ENCODE measurements at regions of chr12 and their contacts with region 1.

Region 1: DNA sequence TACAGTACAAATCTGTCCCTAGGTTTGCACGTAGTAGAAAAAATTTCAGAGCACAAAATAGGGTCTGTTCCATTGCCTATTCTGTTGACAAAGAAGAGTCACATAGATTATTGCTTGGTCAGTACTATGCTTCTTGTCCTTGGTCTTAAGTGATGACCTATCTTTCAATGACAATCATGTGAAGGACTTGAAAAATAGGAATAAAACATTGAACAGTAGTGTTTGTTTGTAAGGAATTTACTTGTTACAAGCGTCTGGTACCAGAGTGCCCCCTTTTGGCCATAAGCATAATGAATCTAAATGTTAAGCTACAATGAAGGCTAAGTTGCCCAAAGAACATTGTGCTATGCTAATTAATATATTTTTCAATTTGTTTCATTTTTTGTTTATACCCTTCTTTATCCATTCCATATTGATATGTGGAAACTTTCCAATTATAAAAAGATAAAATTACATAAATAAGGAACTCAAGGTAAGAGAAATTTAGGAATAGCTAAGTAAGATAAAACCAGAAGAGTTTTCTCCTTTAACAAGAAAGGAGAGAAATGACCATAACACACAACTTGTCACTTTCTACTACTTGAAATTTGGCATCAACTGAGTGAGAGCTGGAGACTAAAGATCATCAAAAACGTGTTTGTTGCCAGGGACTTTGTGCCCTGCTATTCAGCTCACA is 204.7 kb downstream of the EPS8 start:
- DNase-seq: peak in 1 of 2 donors; percentile 51
- H3K4me3 ChIP-seq: no peak overlapping the region
- H3K27ac ChIP-seq: no peak overlapping the region
- H3K4me1 ChIP-seq: no peaks in the 10 kb centered on the region
- H3K27me3 ChIP-seq: no peaks in the 10 kb centered on the region
- CTCF ChIP-seq: peak; percentile 56 to 81 (median 76)
- POLR2A ChIP-seq: no peak

Region 2: DNA sequence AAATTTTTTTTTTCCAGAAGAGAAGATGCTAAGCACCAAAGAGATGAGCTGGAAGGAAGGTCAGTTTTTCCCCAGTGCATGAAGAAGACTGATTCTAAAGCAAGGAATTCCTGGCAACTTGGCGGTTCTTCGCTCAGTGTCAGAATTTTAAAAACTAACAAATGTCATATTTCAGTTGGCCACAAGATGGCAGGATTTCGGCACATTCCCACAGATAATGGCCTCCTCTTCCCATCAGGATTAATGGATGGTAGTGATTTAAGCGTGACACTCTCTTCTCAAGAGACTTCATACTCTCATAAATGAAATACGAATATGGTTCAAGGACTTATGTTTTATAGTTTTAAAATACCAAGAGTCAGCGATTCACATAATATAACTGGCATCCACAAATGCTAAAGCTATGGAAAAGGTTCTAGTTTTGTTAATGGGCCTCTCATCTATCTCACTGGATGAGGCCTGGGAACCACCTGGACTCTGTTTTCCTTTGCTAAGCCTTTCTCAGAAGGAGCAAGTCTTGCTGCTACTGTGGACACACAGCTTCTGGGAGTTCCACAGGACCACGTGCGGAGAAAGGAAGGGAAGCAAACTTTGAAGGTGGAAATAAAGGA is 308.3 kb before region 1 on chr12:
- intact Hi-C with region 1: loop called (anchors 10 kb)
- DNase-seq: peak in 1 of 2 donors; percentile 45
- H3K4me3 ChIP-seq: no peak overlapping the region
- H3K27ac ChIP-seq: peak overlapping the region; percentile 80 to 83
- H3K4me1 ChIP-seq: peaks cover 0 to 9% of the 10 kb centered on the region in 2 donors
- H3K27me3 ChIP-seq: no peaks in the 10 kb centered on the region
- CTCF ChIP-seq: peak; percentile 68 to 75 (median 74)
- POLR2A ChIP-seq: no peak

Region 3: DNA sequence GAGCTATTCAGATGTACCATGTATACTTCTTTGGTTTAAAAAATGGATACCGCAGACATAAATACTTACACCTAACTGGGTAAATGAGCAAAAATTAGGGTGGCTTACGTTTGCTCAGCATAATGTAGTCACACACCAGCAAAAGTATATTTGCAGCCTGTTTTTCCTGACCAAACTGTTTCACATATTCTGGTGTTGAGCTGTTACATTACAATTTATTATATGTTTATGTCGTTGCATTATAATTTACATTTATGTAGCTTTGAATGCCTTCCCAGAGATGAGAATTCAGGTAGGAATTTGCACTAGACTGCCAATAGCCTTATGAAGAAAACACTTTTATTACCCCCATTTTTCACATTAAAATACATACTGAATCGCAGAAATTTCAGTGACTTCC is 78.9 kb before region 1 on chr12:
- intact Hi-C with region 1: no loop called
- DNase-seq: no peak
- H3K4me3 ChIP-seq: no peak overlapping the region
- H3K27ac ChIP-seq: peak overlapping the region; percentile 14 to 78
- H3K4me1 ChIP-seq: no peaks in the 10 kb centered on the region
- H3K27me3 ChIP-seq: no peaks in the 10 kb centered on the region
- CTCF ChIP-seq: no peak
- POLR2A ChIP-seq: no peak

Region 4: DNA sequence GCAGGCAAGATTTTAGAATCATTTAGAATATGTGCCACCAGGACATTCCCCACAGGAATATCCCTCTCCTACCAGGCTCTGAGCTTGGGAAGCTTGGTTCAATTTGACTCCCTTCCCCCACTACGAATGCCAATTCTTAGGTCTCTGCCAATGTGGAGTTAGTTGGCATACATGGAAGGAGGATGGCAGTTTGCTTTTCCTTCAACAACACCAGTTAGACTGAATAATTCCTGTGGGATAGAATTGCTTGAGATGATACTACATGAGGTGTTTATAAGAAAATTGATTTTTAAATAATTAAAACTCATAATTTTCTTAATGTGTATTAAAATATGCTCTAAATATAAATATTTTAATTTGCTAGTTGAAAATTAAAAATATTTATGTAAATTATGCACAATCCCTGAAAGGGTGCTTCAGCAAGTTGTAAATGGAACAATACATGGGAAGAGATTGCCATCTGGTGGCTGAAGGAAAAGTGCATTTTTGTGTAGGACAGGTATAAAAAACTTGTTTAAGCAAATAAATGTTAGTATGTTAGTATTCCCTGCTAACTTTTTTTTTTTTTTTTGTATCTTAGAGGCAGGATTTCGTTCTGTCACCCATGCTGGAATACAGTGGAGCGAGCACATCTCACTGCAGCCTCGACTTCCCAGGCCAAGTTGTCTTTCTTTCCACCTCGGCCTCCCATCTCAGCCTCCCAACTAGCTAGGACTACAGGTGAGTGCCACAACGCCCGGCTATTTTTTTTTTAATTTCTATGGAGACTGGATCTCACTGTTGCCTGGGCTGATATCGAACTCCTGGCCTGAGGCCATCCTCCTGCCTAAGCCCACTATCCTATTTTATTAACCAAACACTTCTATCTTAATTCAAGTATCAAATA is 271.8 kb after region 1 on chr12:
- intact Hi-C with region 1: loop called (anchors 5 kb)
- DNase-seq: peak in 1 of 2 donors; percentile 62
- H3K4me3 ChIP-seq: no peak overlapping the region
- H3K27ac ChIP-seq: peak overlapping the region; percentile 27 to 30
- H3K4me1 ChIP-seq: no peaks in the 10 kb centered on the region
- H3K27me3 ChIP-seq: no peaks in the 10 kb centered on the region
- CTCF ChIP-seq: peak; percentile 83 to 95 (median 88)
- POLR2A ChIP-seq: no peak